Ovary (tissue), 10 donors: ENCODE measurements at regions of chr2 and their contacts with region 1.

Region 1: DNA sequence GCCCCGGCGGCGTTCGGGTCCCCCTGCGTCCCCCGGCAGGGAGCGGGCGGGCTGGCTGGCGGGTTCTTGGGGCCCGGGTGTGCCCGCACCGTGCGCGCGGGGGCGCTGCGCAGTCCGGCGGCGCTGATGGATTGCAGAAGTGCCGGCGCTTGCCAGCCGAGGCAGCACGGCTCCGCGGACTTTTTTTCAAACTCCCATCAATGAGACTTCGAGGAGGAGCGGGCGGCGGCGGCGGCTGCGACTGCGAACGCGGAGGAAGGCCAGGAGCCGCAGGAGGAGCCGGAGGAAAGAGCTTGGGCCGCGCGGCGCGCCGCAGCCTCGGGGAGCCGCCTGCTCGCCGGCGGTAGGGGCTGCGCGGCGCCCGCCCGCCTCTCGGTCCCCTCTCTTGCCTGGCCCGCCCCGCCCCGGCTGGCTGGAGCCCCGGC is at the start of gene GLI2:
- DNase-seq: peak; percentile 81 to 91 (median 85)
- H3K4me3 ChIP-seq: peak within 1 kb of the TSS; percentile 48
- H3K27ac ChIP-seq: peak within 1 kb of the TSS; percentile 78 to 97
- H3K4me1 ChIP-seq: peaks cover 22% of the 10 kb centered on the region
- H3K27me3 ChIP-seq: no peaks in the 10 kb centered on the region
- CTCF ChIP-seq: peak; percentile 54 to 72 (median 66)
- EP300 ChIP-seq: no peak
- POLR2A ChIP-seq: peak; percentile 17
- total RNA-seq, gene GLI2: 6.9 to 53.0 (median 38.9) TPM

Region 2: DNA sequence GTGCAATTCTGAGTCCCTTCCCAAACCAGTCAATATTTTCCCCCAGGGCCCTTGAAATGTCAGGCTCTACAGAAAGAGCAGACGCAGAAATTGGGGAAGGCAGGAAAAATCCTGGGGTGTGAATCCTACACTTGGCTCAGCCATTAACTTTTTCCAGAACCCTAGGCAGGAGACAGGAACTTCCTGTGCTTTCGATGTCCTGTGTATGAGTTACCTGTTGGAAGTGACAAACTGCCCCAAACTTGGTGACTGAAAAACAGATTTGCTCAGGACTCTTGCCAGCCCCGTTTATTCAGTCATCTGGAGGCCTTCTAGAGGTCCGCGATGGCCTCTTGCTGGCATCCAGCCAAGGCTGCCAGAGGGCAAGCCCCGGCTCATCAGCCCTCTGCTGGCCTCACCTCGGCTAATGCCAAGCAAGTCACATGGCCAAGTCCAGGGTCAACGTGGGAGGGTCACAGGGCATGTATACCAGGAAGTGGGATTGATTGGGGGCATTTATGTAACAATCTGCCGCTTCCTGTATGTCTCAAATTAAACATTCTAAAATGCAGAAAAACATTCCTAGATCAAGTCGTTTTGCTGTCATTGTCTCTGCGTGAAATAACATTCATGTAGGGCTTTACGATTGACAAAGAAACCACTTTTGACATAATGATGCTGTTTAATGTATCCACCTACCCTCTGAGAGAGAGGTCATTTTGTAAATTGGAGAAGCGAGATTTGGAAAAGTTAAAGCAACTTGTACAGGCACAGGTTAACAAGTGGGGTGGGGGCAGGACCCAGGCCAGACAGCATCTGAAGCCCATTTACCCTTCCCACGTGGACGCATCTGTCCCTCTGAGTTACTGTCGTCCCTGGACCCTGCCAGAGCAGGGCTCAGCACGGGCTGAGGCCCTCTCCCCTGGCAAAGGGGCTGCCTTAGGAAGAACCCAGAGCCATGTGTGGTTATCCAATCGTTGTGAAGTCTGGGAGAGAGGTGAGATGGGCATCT is 210.4 kb before region 1 on chr2:
- intact Hi-C with region 1: no loop called
- DNase-seq: peak in 1 of 5 donors; percentile 48
- H3K4me3 ChIP-seq: no peak overlapping the region
- H3K27ac ChIP-seq: no peak overlapping the region
- H3K4me1 ChIP-seq: peaks cover 2% of the 10 kb centered on the region
- H3K27me3 ChIP-seq: no peaks in the 10 kb centered on the region
- CTCF ChIP-seq: no peak
- EP300 ChIP-seq: no peak
- POLR2A ChIP-seq: no peak

Region 3: DNA sequence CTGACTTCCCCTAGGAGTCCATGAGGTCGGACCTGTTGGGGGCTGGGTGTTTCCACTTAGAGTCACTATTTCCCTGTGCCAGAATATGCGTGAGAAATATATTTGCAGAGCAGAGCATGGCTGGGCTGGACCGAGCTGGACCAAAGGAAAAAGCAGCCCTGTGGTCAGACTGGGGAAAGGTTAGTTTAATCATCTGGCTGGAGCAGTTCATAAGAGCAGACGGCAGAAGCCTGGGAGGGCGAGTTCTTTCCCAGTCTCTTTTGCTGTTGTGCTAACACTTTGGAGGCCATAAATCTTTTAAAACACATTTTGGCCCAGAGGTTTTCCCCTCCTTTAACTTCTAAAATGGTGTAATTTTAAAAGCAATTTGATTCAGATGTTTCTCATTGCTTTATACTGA is 66.4 kb after region 1 on chr2:
- intact Hi-C with region 1: loop called in 1 of 4 experiments (anchors 5 kb)
- DNase-seq: peak; percentile 51 to 58 (median 53)
- H3K4me3 ChIP-seq: no peak overlapping the region
- H3K27ac ChIP-seq: peak overlapping the region in 1 of 2 donors; percentile 36
- H3K4me1 ChIP-seq: peaks cover 19% of the 10 kb centered on the region
- H3K27me3 ChIP-seq: no peaks in the 10 kb centered on the region
- CTCF ChIP-seq: no peak
- EP300 ChIP-seq: no peak
- POLR2A ChIP-seq: no peak

Region 4: DNA sequence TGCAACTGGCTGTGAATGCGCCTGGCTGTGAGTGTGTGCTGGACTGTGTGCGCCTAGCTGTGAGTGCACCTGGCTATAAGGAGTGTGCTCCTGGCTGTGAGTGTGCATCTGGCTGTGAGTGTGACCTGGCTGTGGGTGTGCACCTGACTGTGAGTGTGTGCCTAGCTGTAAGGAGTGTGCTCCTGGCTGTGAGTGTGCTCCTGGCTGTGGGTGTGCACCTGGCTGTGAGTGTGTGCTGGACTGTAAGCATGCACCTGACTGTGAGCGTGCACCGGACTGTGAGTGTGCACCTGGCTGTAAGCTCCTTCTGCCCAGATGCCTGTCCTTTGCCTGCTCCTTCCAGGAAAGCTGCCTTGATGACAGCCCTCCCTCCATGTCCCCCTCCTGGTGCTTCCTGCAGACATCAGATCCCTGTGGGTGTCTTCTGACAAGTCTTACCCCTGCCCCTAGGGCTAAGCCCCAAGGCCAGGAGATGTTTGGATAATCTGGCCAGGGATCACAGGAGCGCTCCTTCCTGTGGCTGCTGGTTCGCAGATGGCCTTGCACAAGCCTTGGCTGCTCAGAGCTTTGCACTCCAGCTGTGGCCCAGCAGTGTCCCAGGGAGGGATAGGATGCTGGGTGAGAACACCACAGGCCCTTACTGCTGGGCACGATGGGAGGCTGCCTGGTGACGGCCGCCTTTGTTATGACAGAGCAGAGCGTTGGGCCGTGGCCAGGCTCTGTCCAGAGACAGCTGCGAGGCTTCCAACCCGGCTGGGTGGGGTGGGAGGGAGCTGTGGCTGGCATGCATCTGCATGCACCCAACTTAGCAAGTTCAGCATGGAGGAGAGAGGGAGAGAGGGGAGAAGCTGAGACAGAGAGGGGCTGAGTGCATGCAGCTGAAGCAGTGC is 89.9 kb after region 1 on chr2:
- intact Hi-C with region 1: loop called in 2 of 4 experiments (anchors 10 kb)
- DNase-seq: peak; percentile 47 to 74 (median 65)
- H3K4me3 ChIP-seq: no peak overlapping the region
- H3K27ac ChIP-seq: no peak overlapping the region
- H3K4me1 ChIP-seq: peaks cover 41% of the 10 kb centered on the region
- H3K27me3 ChIP-seq: no peaks in the 10 kb centered on the region
- CTCF ChIP-seq: no peak
- EP300 ChIP-seq: no peak
- POLR2A ChIP-seq: no peak

Region 5: DNA sequence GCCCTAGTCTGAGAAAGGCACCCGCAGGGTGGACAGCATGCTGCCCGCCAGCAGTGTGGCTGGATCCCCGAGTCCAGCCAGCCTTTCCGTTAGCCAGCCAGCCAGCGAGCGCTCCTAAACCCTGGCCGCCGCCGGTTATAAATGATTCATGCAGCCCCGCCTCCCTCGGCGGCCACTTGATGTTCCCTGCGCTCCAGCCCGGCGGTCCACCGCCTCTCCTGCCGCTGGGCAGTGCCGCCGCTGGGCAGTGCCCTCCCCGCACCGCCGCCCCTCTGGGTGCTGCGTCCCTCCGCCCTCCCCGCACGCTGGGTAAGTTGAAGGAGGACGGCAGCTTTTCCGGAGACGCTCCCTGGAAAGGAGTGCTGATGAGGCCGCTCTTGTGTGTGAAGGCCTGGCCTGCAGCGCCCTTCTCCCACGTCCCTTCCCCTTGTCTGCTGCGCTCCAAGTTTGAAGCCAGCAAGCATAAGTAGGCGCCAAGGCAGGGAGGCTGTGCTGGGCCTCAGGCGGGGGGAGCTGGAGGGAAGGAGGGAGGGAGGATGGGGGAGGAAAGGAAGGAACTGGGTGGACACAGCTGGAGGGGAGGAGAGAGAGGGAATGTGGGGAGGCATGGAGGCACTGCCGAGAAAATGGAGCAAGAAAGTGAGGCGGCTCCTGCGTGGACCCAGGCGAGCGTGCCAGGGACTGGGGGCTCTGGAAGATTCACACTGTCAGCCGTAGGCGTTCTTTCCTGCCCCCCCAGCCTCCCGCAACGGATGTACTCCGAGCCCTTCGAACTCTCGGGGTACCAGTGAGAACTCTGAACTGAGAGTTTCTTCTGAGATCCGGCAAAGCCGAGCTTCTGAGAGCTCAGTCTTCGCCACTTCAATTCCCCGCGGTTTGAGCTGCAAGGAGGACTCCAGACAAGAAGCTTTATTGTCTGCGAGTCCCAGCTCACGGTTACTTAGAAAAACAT is 131.8 kb after region 1 on chr2:
- intact Hi-C with region 1: loop called in 1 of 4 experiments (anchors 10 kb)
- DNase-seq: peak; percentile 81 to 86 (median 85)
- H3K4me3 ChIP-seq: peak overlapping the region; percentile 36
- H3K27ac ChIP-seq: peak overlapping the region; percentile 40 to 81
- H3K4me1 ChIP-seq: peaks cover 28% of the 10 kb centered on the region
- H3K27me3 ChIP-seq: no peaks in the 10 kb centered on the region
- CTCF ChIP-seq: no peak
- EP300 ChIP-seq: no peak
- POLR2A ChIP-seq: no peak

Region 6: GRCh38 chr2:120914839-120915521 is 179.2 kb after region 1 on chr2:
- intact Hi-C with region 1: loop called in 3 of 4 experiments (anchors 5 to 10 kb)
- DNase-seq: peak; percentile 88 to 96 (median 92)
- H3K4me3 ChIP-seq: no peak overlapping the region
- H3K27ac ChIP-seq: peak overlapping the region in 1 of 2 donors; percentile 85
- H3K4me1 ChIP-seq: peaks cover 63% of the 10 kb centered on the region
- H3K27me3 ChIP-seq: no peaks in the 10 kb centered on the region
- CTCF ChIP-seq: no peak
- EP300 ChIP-seq: no peak
- POLR2A ChIP-seq: no peak

Region 7: GRCh38 chr2:121071034-121071504 is 335.3 kb after region 1 on chr2:
- intact Hi-C with region 1: loop called in 1 of 4 experiments (anchors 2 kb)
- DNase-seq: peak; percentile 68 to 91 (median 90)
- H3K4me3 ChIP-seq: no peak overlapping the region
- H3K27ac ChIP-seq: no peak overlapping the region
- H3K4me1 ChIP-seq: no peaks in the 10 kb centered on the region
- H3K27me3 ChIP-seq: no peaks in the 10 kb centered on the region
- CTCF ChIP-seq: peak; percentile 82 to 92 (median 85)
- EP300 ChIP-seq: no peak
- POLR2A ChIP-seq: no peak